ENCODE measurements at regions of chr15 and their contacts with region 1.

Region 1: DNA sequence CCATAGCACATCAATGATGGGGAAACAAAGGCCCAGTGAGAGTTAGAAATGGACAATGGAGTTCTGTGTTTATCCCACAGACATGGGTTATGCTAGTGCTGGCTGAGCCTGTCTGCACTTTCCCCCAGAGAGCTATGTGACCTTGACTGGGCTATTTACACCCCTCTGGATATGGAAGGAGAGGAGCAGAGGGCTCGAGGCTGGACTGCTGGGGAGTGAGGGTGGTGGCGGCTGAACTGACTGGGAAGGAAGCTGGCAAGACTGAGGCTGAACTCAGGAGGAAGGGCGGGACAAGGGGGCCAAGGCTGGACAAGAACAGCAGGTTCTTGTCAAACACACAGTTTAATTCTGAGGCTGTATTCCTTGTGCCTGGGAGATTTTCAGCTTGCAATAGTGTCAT is 10.8 kb upstream of the INSYN1 start:
- DNase-seq: no peak
- ATAC-seq: no peak
- H3K4me3 ChIP-seq: no peak overlapping the region
- H3K27ac ChIP-seq: no peak overlapping the region
- H3K4me1 ChIP-seq: no peaks in the 10 kb centered on the region
- H3K27me3 ChIP-seq: peaks cover 0 to 2% of the 10 kb centered on the region in 2 experiments; a peak in 3 of 4 replicates
- CTCF ChIP-seq: no peak
- EP300 ChIP-seq: no peak
- POLR2A ChIP-seq: no peak
- RAD21 ChIP-seq: no peak

Region 2: DNA sequence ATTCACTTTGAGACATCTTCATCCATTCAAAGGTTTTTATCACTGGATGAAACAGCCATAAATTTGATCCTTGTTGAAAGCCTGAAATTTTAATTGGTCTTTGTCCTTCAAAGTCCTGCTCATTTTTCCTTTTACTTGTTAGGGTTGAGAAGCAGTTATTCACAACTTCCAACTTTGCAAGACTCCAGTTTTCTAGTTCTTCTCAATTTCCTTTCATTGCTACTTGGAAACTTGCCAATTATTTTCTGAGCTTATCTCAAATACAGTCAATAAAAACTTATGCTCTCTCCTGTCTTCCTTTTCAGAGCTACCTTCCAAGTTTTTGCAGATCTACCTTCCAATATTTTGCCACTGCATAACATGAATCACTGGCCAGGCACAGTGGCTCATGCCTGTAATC is 103.5 kb before region 1 on chr15:
- CTCF ChIA-PET with region 1: no interaction called
- POLR2A ChIA-PET with region 1: no interaction called
- RAD21 ChIA-PET with region 1: no interaction called
- SMC1A ChIA-PET with region 1: no interaction called
- in situ Hi-C with region 1: no loop called
- intact Hi-C with region 1: no loop called
- DNase-seq: no peak
- ATAC-seq: no peak
- H3K4me3 ChIP-seq: no peak overlapping the region
- H3K27ac ChIP-seq: no peak overlapping the region
- H3K4me1 ChIP-seq: no peaks in the 10 kb centered on the region
- H3K27me3 ChIP-seq: no peaks in the 10 kb centered on the region; a peak in 1 of 4 replicates
- CTCF ChIP-seq: no peak
- EP300 ChIP-seq: no peak
- POLR2A ChIP-seq: no peak
- RAD21 ChIP-seq: no peak

Region 3: DNA sequence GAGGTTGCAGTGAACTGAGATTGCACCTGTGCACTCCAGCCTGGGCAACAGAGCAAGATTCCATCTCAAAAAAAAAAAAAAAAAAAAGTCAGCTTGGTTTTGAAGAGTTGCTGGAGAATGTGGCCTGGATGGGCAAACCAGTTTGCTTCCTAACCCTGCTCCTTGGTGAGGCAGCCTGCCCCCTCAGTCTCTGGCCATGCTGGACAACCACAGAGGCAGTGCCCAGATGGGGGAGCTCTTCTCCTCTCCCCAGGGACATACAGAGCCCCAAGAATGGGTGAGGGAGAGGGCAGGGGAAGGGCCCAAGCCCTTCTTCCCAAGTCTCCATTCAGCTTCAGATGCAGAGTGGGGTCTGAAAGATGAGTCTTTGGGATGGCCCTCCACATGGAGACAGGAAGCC is 51.8 kb before region 1 on chr15:
- CTCF ChIA-PET with region 1: no interaction called
- POLR2A ChIA-PET with region 1: no interaction called
- RAD21 ChIA-PET with region 1: no interaction called
- SMC1A ChIA-PET with region 1: no interaction called
- in situ Hi-C with region 1: loop called (anchors 5 kb)
- intact Hi-C with region 1: no loop called
- DNase-seq: no peak
- ATAC-seq: no peak
- H3K4me3 ChIP-seq: no peak overlapping the region
- H3K27ac ChIP-seq: no peak overlapping the region
- H3K4me1 ChIP-seq: no peaks in the 10 kb centered on the region
- H3K27me3 ChIP-seq: no peaks in the 10 kb centered on the region; a peak in 2 of 4 replicates
- CTCF ChIP-seq: no peak
- EP300 ChIP-seq: no peak
- POLR2A ChIP-seq: no peak
- RAD21 ChIP-seq: no peak

Region 4: DNA sequence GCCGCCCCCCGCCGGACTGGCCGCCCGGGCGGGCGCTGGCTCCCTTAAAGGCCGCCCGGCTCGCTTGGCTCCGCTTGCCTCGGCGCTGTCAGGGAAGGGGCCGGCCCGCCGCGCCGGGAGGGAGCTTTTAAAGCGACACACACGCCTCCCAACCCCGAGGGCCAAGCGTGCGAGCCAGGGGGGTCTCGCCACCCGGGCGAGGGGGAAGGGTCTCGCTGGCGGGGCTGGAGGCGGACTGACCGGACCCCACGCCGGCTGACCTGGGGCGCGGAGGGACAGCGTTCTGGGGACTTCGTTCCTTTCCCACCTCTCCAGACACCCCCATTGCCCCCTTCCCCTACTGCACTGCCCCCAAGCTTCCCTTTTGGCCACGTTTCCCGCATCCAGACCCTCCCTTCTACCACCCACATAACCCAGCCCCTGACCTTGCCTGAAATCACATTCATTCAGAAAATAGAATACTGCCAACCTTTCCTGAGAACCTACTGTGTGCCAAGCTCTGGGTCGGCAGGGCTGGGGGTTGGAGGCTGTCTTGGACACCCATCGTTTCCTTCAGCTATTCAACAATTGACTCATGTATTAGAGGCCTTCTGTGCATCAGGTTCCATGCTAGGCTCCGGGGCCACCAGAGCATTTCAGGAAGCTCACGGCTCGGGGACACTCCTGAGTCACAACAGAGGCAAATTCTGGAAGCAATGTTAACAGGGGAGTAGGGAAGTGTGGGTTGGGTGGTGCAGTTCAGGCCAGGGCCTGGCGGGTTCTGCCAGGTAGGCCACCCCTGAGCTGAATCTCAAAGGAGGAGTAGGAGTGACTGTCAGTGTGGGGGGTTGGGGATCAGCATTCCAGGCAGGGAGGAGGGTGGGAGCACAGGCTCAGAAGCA is 10.4 kb before region 1 on chr15 and contains the start of gene INSYN1:
- CTCF ChIA-PET with region 1: no interaction called
- POLR2A ChIA-PET with region 1: no interaction called
- RAD21 ChIA-PET with region 1: no interaction called
- SMC1A ChIA-PET with region 1: no interaction called
- in situ Hi-C with region 1: no loop called
- intact Hi-C with region 1: no loop called
- DNase-seq: no peak
- ATAC-seq: no peak
- H3K4me3 ChIP-seq: no peak within 1 kb of the TSS
- H3K27ac ChIP-seq: no peak within 1 kb of the TSS
- H3K4me1 ChIP-seq: no peaks in the 10 kb centered on the region
- H3K27me3 ChIP-seq: peaks cover 5 to 7% of the 10 kb centered on the region in 2 experiments; a peak in 3 of 4 replicates
- CTCF ChIP-seq: no peak
- EP300 ChIP-seq: no peak
- POLR2A ChIP-seq: no peak
- RAD21 ChIP-seq: no peak
- polyA plus RNA-seq, gene INSYN1: not detected